ENCODE measurements at regions of chr19 and their contacts with region 1.

Region 1: GRCh38 chr19:35449053-35449687 is 1.1 kb downstream of the FFAR2 start:
- DNase-seq: no peak
- CTCF ChIP-seq: no peak

Region 2: DNA sequence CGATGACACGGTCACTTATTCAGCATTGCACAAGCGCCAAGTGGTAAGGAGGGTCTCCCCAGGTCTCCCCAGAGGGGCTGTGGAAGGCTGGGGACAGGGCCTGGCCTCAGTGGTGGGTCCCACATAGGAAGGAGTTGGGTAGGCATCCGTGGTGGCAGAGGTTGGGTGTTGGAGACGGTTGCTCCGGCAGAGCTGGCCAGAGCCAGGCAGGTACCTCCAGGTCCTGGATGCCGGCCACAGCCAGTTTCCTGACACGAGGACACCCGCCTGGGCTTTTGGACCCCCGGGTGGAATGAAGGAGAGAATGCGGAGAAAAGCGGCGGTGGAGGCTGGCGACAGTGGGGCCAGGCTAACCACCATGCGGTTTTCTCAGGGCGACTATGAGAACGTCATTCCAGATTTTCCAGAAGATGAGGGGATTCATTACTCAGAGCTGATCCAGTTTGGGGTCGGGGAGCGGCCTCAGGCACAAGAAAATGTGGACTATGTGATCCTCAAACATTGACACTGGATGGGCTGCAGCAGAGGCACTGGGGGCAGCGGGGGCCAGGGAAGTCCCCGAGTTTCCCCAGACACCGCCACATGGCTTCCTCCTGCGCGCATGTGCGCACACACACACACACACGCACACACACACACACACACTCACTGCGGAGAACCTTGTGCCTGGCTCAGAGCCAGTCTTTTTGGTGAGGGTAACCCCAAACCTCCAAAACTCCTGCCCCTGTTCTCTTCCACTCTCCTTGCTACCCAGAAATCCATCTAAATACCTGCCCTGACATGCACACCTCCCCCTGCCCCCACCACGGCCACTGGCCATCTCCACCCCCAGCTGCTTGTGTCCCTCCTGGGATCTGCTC is 102.7 kb before region 1 on chr19:
- CTCF ChIA-PET with region 1: no interaction called
- POLR2A ChIA-PET with region 1: no interaction called
- DNase-seq: peak; percentile 78
- CTCF ChIP-seq: no peak

Region 3: DNA sequence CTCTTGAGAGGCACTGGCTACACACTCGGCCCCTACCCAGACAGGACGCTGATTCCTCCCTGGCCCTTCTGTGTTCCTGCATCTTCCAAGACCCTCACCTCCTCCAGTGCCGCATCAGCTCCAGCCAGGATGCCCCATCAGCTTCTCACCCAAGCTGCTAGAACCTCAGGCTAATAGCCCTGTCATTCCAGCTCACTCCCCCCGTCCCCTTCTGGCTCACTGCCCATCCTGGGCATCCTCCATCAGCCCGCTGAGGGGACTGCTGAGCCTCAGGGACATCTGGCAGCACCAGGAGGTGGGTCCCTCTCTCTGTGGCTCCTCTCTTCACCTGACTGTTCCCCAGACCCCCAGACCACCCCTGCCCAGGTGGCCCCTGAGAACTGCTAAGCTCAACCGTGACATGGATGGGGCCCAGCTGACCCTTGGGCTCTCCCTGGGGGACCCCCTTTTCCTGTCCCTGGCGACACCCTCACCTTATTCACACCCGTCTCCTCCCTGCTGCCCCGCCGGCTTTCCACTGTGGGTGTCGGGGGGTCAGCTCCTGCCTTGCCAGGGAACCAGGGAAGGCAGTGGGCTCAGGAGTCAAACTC is 86.1 kb before region 1 on chr19:
- CTCF ChIA-PET with region 1: no interaction called
- POLR2A ChIA-PET with region 1: interaction called, 10 read pairs
- DNase-seq: no peak
- CTCF ChIP-seq: no peak

Region 4: DNA sequence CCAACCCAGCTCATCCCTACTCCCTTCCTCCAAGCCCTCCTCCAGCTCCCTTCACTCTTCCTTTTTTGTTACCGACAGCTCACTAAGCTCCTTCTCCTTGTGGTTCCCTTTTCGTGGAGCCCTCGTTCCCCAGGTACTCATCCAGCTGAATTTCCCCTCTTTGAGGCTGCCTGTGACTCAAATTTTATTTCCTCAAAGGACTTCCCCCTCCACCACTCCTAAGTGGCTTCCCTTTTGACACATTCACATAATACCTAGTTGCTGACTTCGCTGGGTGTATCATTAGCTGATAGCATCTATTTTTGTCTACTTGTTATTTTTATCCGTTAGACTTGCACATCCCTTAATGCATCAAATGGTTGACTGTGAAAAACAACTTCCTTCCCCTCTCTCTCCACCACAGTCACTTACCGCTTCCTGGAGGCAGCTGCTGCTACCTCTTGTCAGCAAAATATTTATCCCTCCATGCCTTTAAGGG is 13.3 kb after region 1 on chr19:
- CTCF ChIA-PET with region 1: interaction called, 13 read pairs
- POLR2A ChIA-PET with region 1: interaction called, 4 read pairs
- DNase-seq: peak; percentile 74
- CTCF ChIP-seq: peak; percentile 39

Measured in GM10248 (cell line).